ENCODE measurements at regions of chr6 and their contacts with region 1.

Region 1: DNA sequence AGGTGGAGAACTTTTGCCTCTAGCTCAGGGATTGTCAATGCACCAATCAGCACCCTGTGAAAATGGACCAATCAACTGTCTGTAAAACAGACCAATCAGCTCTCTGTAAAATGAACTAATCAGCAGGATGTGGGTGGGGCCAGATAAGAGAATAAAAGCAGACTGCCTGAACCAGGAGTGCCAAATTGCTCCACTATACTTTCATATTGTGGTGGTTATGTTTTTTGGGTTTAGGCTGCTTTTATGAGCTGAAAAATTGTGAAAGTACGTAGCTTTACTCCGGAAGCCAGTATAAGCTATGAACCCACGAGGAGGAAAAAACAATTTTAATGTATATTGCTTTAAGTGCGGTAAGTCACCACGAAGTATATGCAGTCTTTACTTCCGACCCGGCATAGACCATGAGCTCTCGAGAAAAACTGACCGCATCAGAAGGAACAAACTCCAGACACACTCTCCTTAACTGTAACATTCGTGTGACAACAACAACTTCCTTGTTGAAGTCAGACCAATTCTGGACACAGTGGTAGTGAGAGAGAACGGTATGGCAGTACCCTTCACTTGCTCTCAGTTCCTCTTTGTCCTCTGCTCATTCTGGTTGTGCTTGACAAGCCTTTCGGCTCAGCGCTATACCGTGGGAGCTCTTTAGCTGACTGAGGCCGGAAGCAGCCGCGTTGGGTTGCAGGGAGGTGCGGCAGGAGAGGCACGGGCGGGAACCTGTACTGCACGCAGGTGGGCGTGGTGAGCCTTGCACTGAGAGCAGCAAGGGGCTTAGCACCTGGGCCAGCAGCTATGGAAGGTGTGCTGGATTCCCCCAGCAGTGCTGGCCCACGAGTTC is 81.9 kb upstream of the E2F3 start:
- DNase-seq: peak; percentile 60 to 90 (median 80)
- H3K4me3 ChIP-seq: peak overlapping the region; percentile 61
- H3K4me3 Mint-ChIP-seq: peak overlapping the region; percentile 83 to 93 (median 91)
- H3K27ac ChIP-seq: peak overlapping the region; percentile 72
- H3K27ac Mint-ChIP-seq: peak overlapping the region; percentile 87 to 98 (median 97)
- H3K4me1 ChIP-seq: peaks cover 11% of the 10 kb centered on the region
- H3K4me1 Mint-ChIP-seq: peaks cover 21 to 25% (median 22%) of the 10 kb centered on the region in 3 donors
- H3K27me3 ChIP-seq: no peaks in the 10 kb centered on the region
- H3K27me3 Mint-ChIP-seq: peaks cover 0 to 2% of the 10 kb centered on the region in 2 donors

Region 2: GRCh38 chr6:20202324-20202658 is 117.4 kb before region 1 on chr6:
- CTCF ChIA-PET with region 1: no interaction called
- POLR2A ChIA-PET with region 1: no interaction called
- DNase-seq: no peak
- H3K4me3 ChIP-seq: no peak overlapping the region
- H3K4me3 Mint-ChIP-seq: no peak overlapping the region
- H3K27ac ChIP-seq: peak overlapping the region; percentile 45
- H3K27ac Mint-ChIP-seq: no peak overlapping the region
- H3K4me1 ChIP-seq: peaks cover 39% of the 10 kb centered on the region
- H3K4me1 Mint-ChIP-seq: peaks cover 53 to 79% (median 74%) of the 10 kb centered on the region in 3 donors
- H3K27me3 ChIP-seq: no peaks in the 10 kb centered on the region
- H3K27me3 Mint-ChIP-seq: no peaks in the 10 kb centered on the region

Region 3: GRCh38 chr6:20212392-20213217 is 107.1 kb before region 1 on chr6 and contains the start of gene MBOAT1:
- CTCF ChIA-PET with region 1: no interaction called
- POLR2A ChIA-PET with region 1: interaction called, 10 read pairs
- DNase-seq: peak; percentile 42 to 72 (median 57)
- H3K4me3 ChIP-seq: peak within 1 kb of the TSS; percentile 60
- H3K4me3 Mint-ChIP-seq: peak within 1 kb of the TSS; percentile 94 to 99 (median 98)
- H3K27ac ChIP-seq: peak within 1 kb of the TSS; percentile 56
- H3K27ac Mint-ChIP-seq: peak within 1 kb of the TSS; percentile 92 to 97 (median 96)
- H3K4me1 ChIP-seq: peaks cover 22% of the 10 kb centered on the region
- H3K4me1 Mint-ChIP-seq: peaks cover 43 to 54% (median 50%) of the 10 kb centered on the region in 3 donors
- H3K27me3 ChIP-seq: no peaks in the 10 kb centered on the region
- H3K27me3 Mint-ChIP-seq: no peaks in the 10 kb centered on the region
- total RNA-seq, gene MBOAT1: 11.6 to 12.5 TPM

Region 4: GRCh38 chr6:20334334-20334733 is 14.6 kb after region 1 on chr6:
- CTCF ChIA-PET with region 1: interaction called, 11 read pairs
- POLR2A ChIA-PET with region 1: interaction called, 6 read pairs
- DNase-seq: no peak
- H3K4me3 ChIP-seq: no peak overlapping the region
- H3K4me3 Mint-ChIP-seq: peak overlapping the region in 1 of 7 donors; percentile 8
- H3K27ac ChIP-seq: no peak overlapping the region
- H3K27ac Mint-ChIP-seq: no peak overlapping the region
- H3K4me1 ChIP-seq: peaks cover 17% of the 10 kb centered on the region
- H3K4me1 Mint-ChIP-seq: peaks cover 22 to 31% (median 30%) of the 10 kb centered on the region in 3 donors
- H3K27me3 ChIP-seq: no peaks in the 10 kb centered on the region
- H3K27me3 Mint-ChIP-seq: peaks cover 0 to 3% of the 10 kb centered on the region in 2 donors

Region 5: GRCh38 chr6:20349225-20349624 is 29.5 kb after region 1 on chr6:
- CTCF ChIA-PET with region 1: no interaction called
- POLR2A ChIA-PET with region 1: no interaction called
- DNase-seq: no peak
- H3K4me3 ChIP-seq: no peak overlapping the region
- H3K4me3 Mint-ChIP-seq: no peak overlapping the region
- H3K27ac ChIP-seq: no peak overlapping the region
- H3K27ac Mint-ChIP-seq: no peak overlapping the region
- H3K4me1 ChIP-seq: no peaks in the 10 kb centered on the region
- H3K4me1 Mint-ChIP-seq: peaks cover 20 to 45% (median 28%) of the 10 kb centered on the region in 3 donors
- H3K27me3 ChIP-seq: no peaks in the 10 kb centered on the region
- H3K27me3 Mint-ChIP-seq: peaks cover 0 to 4% of the 10 kb centered on the region in 2 donors

Region 6: DNA sequence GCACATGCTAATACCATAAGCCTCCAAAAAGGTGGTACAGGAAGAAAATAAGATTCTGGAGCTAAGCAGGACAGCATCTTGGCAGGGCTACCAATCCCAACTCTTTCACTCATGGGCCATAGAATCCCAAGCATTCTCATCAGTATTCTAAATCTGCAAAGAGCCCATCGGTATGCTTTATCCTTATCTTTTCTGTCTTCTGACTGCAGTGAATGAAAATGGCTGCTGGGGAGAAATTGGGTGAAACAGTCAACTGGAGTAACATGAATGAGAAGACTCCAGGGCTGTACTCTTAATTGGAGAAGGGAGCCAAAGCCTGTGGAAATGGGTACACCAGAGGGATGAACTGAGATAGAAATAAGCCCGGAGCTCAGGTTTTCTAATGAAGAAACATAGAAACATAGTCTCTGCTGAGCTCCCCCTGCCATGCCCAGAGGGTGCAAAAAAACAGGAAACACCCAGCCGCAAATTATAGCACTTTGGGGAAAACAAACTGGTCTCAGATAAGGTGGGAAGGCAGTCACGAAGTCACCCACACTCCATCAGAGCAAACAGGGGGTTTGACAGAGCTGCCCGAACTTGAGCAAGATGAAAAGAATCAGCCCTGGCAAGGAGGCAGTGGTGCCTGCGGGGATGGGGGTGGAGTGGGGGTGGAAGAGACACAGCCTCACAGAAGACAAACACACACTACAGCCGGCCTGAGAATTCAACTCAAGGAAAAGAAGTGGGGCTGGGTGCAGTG is 46.5 kb after region 1 on chr6:
- CTCF ChIA-PET with region 1: interaction called, 26 read pairs
- POLR2A ChIA-PET with region 1: interaction called, 65 read pairs
- DNase-seq: peak; percentile 7 to 75 (median 64)
- H3K4me3 ChIP-seq: peak overlapping the region; percentile 25
- H3K4me3 Mint-ChIP-seq: peak overlapping the region; percentile 57 to 84 (median 83)
- H3K27ac ChIP-seq: no peak overlapping the region
- H3K27ac Mint-ChIP-seq: peak overlapping the region; percentile 86 to 96 (median 96)
- H3K4me1 ChIP-seq: peaks cover 63% of the 10 kb centered on the region
- H3K4me1 Mint-ChIP-seq: peaks cover 61 to 69% (median 68%) of the 10 kb centered on the region in 3 donors
- H3K27me3 ChIP-seq: no peaks in the 10 kb centered on the region
- H3K27me3 Mint-ChIP-seq: peaks cover 0 to 2% of the 10 kb centered on the region in 2 donors

Region 7: GRCh38 chr6:20534295-20535262 is 214.8 kb after region 1 on chr6 and contains the start of gene CDKAL1:
- CTCF ChIA-PET with region 1: interaction called, 5 read pairs
- POLR2A ChIA-PET with region 1: interaction called, 11 read pairs
- DNase-seq: peak; percentile 81 to 94 (median 86)
- H3K4me3 ChIP-seq: peak within 1 kb of the TSS; percentile 77
- H3K4me3 Mint-ChIP-seq: peak within 1 kb of the TSS; percentile 95 to 99 (median 98)
- H3K27ac ChIP-seq: peak within 1 kb of the TSS; percentile 78
- H3K27ac Mint-ChIP-seq: peak within 1 kb of the TSS; percentile 95 to 99 (median 97)
- H3K4me1 ChIP-seq: peaks cover 11% of the 10 kb centered on the region
- H3K4me1 Mint-ChIP-seq: peaks cover 34 to 55% (median 42%) of the 10 kb centered on the region in 3 donors
- H3K27me3 ChIP-seq: no peaks in the 10 kb centered on the region
- H3K27me3 Mint-ChIP-seq: peaks cover 0 to 3% of the 10 kb centered on the region in 2 donors
- total RNA-seq, gene CDKAL1: 29.6 to 30.2 TPM

Measured in CD8-positive, alpha-beta memory T cell (primary cell).